ENCODE measurements at regions of chr6 and their contacts with region 1.

Region 1: GRCh38 chr6:48691420-48691819 is 580.4 kb upstream of the PTCHD4 start:
- DNase-seq: no peak
- H3K4me3 Mint-ChIP-seq: no peak overlapping the region
- H3K27ac Mint-ChIP-seq: no peak overlapping the region
- H3K4me1 Mint-ChIP-seq: no peaks in the 10 kb centered on the region
- H3K27me3 Mint-ChIP-seq: no peaks in the 10 kb centered on the region

Region 2: GRCh38 chr6:48511378-48511777 is 180.0 kb before region 1 on chr6:
- intact Hi-C with region 1: no loop called
- DNase-seq: no peak
- H3K4me3 Mint-ChIP-seq: no peak overlapping the region
- H3K27ac Mint-ChIP-seq: no peak overlapping the region
- H3K4me1 Mint-ChIP-seq: no peaks in the 10 kb centered on the region
- H3K27me3 Mint-ChIP-seq: no peaks in the 10 kb centered on the region

Region 3: DNA sequence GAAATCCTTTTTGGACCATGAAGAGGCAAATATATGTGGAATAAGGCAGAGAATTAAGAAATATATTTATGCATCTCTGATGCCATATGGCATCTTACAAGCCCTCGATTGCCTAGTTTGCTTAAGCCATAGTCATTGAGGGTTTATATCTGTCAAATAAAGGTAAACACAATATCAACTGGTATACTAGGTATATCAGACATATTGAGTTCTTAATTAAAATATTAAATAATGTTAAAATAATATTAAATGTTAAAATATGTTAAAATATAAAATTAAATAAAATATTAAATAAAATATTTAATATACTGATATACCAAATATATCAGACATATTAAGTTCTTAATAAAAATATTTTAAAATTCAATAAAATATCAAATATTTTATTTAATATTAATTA is 13.0 kb before region 1 on chr6:
- intact Hi-C with region 1: loop called (anchors 1 kb)
- DNase-seq: no peak
- H3K4me3 Mint-ChIP-seq: no peak overlapping the region
- H3K27ac Mint-ChIP-seq: no peak overlapping the region
- H3K4me1 Mint-ChIP-seq: no peaks in the 10 kb centered on the region
- H3K27me3 Mint-ChIP-seq: no peaks in the 10 kb centered on the region